ENCODE measurements at regions of chr5 and their contacts with region 1.

Region 1: DNA sequence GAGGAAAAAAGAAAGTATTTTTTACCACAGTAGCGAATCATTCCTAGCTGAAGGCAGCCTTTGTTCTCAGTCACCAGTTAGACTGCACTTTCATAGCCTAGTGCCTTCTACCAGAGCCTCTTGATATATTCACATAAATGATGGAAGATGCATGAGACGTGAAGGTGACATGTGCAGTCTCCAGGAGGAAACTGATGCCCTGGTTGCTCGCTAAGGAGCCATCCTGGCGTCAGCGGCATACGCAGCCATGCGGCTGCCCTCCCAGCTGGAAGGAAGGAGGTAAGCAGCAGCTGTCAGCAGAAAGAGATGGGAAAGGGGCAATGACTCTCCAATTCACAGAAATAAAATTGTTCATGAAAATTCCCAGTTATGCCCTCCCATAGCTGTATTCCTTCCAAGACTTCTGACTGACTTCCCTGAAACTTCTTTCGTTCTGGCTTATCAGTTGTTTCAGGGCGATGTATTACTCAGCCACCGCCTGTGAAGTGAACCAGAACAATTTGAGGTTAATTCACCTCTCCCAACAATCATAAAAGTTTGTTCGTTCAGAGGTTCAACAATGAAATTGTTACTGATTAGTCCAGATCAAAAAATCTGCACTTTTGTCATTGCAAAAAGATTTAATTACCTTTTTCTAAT is 331.2 kb downstream of the NR2F1-AS1 start:
- DNase-seq: peak; percentile 76
- ATAC-seq: peak; percentile 72
- H3K4me3 ChIP-seq: peak overlapping the region; percentile 40; the same call in 1 of the 2 replicates
- H3K27ac ChIP-seq: peak overlapping the region; percentile 93
- H3K4me1 ChIP-seq: peaks cover 36% of the 10 kb centered on the region
- H3K27me3 ChIP-seq: no peaks in the 10 kb centered on the region
- CTCF ChIP-seq: no peak

Region 2: GRCh38 chr5:92916036-92916435 is 333.7 kb before region 1 on chr5:
- CTCF ChIA-PET with region 1: no interaction called
- POLR2A ChIA-PET with region 1: no interaction called
- intact Hi-C with region 1: loop called (anchors 5 kb)
- DNase-seq: peak; percentile 56
- ATAC-seq: no peak
- H3K4me3 ChIP-seq: no peak overlapping the region
- H3K27ac ChIP-seq: no peak overlapping the region
- H3K4me1 ChIP-seq: peaks cover 13% of the 10 kb centered on the region; the same call in 1 of the 2 replicates
- H3K27me3 ChIP-seq: no peaks in the 10 kb centered on the region
- CTCF ChIP-seq: peak; percentile 63; the same call in 1 of the 2 replicates

Region 3: DNA sequence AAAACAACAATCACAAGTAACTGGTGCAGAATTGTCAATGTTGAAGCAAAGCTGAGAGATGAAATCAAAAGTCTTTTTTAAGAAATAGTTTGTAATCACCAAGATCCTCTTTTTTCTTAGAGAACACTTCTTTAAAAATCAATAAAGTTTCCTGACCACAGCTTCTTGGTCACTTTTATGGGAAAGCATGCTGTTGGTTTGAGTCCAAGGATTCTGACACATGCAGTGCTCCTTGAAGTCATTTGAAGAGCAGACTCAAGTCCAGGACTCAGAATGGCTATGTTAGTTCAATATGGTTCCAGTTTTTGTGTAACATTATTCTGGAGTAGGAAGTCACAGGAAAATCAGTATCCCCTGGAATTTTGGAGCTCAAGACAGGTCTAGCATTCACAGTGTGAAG is 149.3 kb before region 1 on chr5:
- CTCF ChIA-PET with region 1: no interaction called
- POLR2A ChIA-PET with region 1: no interaction called
- intact Hi-C with region 1: loop called (anchors 5 kb)
- DNase-seq: peak; percentile 85
- ATAC-seq: peak; percentile 77
- H3K4me3 ChIP-seq: no peak overlapping the region
- H3K27ac ChIP-seq: peak overlapping the region; percentile 64
- H3K4me1 ChIP-seq: peaks cover 20% of the 10 kb centered on the region
- H3K27me3 ChIP-seq: no peaks in the 10 kb centered on the region
- CTCF ChIP-seq: no peak

Region 4: DNA sequence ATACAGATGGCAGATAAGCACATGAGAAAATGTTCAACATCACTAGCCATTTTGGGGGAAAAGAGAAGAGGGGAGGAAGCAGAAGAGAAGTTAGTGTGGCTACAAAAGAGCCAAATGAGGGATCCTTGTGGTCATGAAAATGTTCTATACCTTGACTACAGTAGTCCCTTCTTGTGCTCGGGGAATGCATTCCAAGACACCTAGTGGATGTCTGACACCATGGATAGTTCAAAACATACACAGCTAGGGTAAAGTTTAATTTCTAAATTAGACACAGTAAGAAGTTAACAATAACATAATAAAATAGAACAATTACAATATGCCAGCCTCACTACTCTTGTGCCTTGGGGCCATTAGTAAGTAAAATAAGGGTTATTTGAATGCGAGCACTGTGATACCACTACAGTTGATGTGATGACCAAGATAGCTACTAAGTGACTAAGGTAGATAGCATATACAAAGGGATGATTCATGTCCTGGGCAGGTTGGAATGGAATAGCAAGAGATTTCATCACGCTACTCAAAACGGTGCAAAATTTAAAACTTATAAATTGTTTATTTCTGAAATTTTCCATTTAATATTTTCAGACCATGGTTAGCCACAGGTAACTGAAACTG is 12.9 kb before region 1 on chr5:
- CTCF ChIA-PET with region 1: no interaction called
- POLR2A ChIA-PET with region 1: no interaction called
- intact Hi-C with region 1: loop called (anchors 2 kb)
- DNase-seq: peak; percentile 90
- ATAC-seq: peak; percentile 90
- H3K4me3 ChIP-seq: no peak overlapping the region
- H3K27ac ChIP-seq: peak overlapping the region; percentile 73
- H3K4me1 ChIP-seq: peaks cover 45% of the 10 kb centered on the region
- H3K27me3 ChIP-seq: no peaks in the 10 kb centered on the region
- CTCF ChIP-seq: peak; percentile 35; the same call in 1 of the 2 replicates

Region 5: GRCh38 chr5:93279296-93279963 is 29.7 kb after region 1 on chr5:
- CTCF ChIA-PET with region 1: no interaction called
- POLR2A ChIA-PET with region 1: no interaction called
- intact Hi-C with region 1: loop called (anchors 2 kb)
- DNase-seq: peak; percentile 64
- ATAC-seq: peak; percentile 74
- H3K4me3 ChIP-seq: peak overlapping the region; percentile 18; the same call in 1 of the 2 replicates
- H3K27ac ChIP-seq: peak overlapping the region; percentile 82
- H3K4me1 ChIP-seq: peaks cover 50% of the 10 kb centered on the region
- H3K27me3 ChIP-seq: no peaks in the 10 kb centered on the region
- CTCF ChIP-seq: no peak

Region 6: GRCh38 chr5:93305984-93306383 is 56.2 kb after region 1 on chr5:
- CTCF ChIA-PET with region 1: no interaction called
- POLR2A ChIA-PET with region 1: no interaction called
- intact Hi-C with region 1: no loop called
- DNase-seq: peak; percentile 86
- ATAC-seq: peak; percentile 68
- H3K4me3 ChIP-seq: no peak overlapping the region
- H3K27ac ChIP-seq: peak overlapping the region; percentile 4; the same call in 1 of the 2 replicates
- H3K4me1 ChIP-seq: peaks cover 41% of the 10 kb centered on the region
- H3K27me3 ChIP-seq: no peaks in the 10 kb centered on the region
- CTCF ChIP-seq: no peak

Region 7: DNA sequence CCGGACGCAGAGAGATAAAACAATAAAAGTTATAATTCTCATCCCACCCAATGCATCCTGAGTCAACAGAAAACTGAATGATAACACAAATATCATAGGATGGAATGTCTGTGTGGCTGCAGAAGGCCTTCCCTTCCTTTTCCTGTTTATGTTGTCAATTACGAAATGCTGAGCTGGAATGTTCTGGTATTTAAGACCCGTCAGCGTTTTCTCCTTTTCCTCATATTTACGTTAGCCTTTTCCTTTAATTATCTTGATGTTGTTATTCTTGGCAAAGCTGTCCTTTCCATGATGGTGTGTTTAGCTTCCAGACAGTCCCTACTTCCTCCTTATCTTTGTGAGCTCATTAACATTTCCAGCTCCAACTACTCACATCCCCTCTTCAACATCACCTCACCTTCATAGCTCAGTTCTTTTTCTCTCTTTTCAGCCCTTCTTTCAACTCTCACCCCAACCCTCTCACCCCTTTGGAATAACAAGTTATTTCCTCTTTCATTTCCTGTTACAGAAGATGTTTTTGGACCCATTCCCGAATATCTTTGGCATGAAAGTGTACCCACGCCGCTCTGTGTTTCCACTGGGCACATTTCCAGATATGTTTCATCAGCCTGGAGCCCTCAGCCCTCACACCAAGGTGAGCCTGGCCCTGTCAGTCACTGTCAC is 109.7 kb after region 1 on chr5:
- CTCF ChIA-PET with region 1: no interaction called
- POLR2A ChIA-PET with region 1: no interaction called
- intact Hi-C with region 1: loop called (anchors 2 kb)
- DNase-seq: peak; percentile 98
- ATAC-seq: peak; percentile 58
- H3K4me3 ChIP-seq: peak overlapping the region; percentile 40
- H3K27ac ChIP-seq: peak overlapping the region; percentile 78
- H3K4me1 ChIP-seq: peaks cover 58% of the 10 kb centered on the region
- H3K27me3 ChIP-seq: no peaks in the 10 kb centered on the region
- CTCF ChIP-seq: no peak

Region 8: DNA sequence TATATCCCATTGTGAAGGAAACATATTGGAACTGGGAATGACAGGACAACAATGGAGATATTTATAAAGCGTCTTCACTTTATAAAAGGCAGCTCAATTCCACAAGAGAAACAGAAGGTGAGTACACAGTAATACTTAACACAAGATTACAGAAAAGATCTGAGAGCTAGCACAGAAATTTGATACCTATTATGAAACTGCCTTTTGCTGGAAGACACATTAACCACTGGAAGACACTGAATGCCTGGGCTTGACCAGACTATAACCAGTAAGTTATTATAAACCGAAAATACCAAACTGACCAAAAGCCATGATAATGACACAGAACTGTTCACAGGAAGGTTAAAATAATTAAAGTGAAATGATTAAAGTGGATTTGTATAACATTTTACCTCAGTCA is 135.9 kb after region 1 on chr5:
- CTCF ChIA-PET with region 1: no interaction called
- POLR2A ChIA-PET with region 1: no interaction called
- intact Hi-C with region 1: no loop called
- DNase-seq: no peak
- ATAC-seq: peak; percentile 33; the same call in 1 of the 2 replicates
- H3K4me3 ChIP-seq: no peak overlapping the region
- H3K27ac ChIP-seq: no peak overlapping the region
- H3K4me1 ChIP-seq: no peaks in the 10 kb centered on the region
- H3K27me3 ChIP-seq: no peaks in the 10 kb centered on the region
- CTCF ChIP-seq: no peak

Region 9: DNA sequence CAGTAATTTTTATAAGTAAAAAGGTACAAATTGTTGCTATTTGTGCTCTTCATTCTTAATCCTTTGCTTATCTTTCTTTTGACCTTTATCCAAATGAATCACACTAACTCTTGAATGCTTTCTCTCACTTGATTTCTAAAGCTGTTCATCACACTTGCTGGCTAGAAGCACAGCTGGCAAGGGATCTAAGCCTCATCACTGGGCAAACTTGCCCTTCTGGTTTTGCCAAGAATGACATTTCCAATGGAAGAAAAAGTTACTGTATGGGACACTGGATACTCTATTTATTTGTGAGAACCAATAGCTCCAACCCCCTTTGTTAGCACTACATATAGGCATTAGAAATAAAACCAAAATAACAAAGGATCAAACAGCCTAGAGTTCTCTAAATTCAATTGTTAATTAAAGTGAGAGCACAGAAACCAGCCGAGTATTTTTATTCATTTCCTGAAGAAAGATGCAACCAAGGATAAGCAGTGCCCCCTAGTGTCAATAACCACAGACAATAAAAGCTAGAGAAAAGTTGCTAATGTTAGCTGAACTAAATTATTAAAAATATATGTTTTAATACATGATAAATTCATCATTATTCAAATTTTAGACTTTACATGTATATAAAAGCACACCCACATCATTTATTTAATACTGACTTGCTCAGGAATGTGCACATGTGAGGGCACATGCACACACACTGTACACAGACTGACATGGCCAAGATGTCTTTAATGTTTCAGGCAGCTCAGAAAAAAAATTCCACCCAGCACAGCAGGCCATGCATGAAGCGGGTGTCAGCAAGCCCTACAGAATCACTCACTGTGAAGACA is 551.4 kb after region 1 on chr5:
- CTCF ChIA-PET with region 1: no interaction called
- POLR2A ChIA-PET with region 1: no interaction called
- intact Hi-C with region 1: loop called (anchors 1 kb)
- DNase-seq: peak; percentile 90
- ATAC-seq: peak; percentile 92
- H3K4me3 ChIP-seq: peak overlapping the region; percentile 36; the same call in 1 of the 2 replicates
- H3K27ac ChIP-seq: no peak overlapping the region
- H3K4me1 ChIP-seq: peaks cover 16% of the 10 kb centered on the region
- H3K27me3 ChIP-seq: no peaks in the 10 kb centered on the region
- CTCF ChIP-seq: peak; percentile 85

Measured in PC-3 (cell line).